Tibial artery (tissue), 4 donors: ENCODE measurements at regions of chr11 and their contacts with region 1.

Region 1: DNA sequence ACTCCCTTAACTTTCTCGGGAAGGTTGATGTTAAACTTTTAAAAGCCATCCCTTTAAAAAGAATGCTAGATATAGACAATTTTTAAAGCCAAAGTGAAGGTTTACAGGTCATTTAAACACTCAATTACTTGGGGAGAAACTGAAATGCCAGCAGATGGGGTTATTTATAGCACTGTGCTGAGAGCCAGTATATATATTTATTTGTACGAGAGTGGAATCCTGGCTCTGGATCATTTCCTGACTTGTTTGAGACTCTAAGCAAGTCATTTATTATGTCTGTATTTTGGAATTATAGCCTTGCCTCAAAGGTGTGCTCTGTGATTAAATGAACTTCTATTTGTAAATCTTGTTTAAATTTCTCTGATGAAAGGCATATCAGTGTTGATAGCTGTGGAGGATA is 6.8 kb upstream of the ZBED5 start:
- DNase-seq: no peak
- H3K4me3 ChIP-seq: no peak overlapping the region
- H3K27ac ChIP-seq: peak overlapping the region; percentile 67 to 91
- H3K4me1 ChIP-seq: peaks cover 0 to 82% (median 44%) of the 10 kb centered on the region in 4 donors
- H3K27me3 ChIP-seq: no peaks in the 10 kb centered on the region
- CTCF ChIP-seq: no peak

Region 2: GRCh38 chr11:10735481-10736475 is 128.9 kb before region 1 on chr11:
- intact Hi-C with region 1: no loop called
- DNase-seq: peak; percentile 95 to 96
- H3K4me3 ChIP-seq: peak overlapping the region; percentile 15 to 28
- H3K27ac ChIP-seq: peak overlapping the region; percentile 68 to 70
- H3K4me1 ChIP-seq: peaks cover 0 to 35% (median 13%) of the 10 kb centered on the region in 4 donors
- H3K27me3 ChIP-seq: no peaks in the 10 kb centered on the region
- CTCF ChIP-seq: peak; percentile 98 to 99

Region 3: GRCh38 chr11:10899121-10899830 is 34.6 kb after region 1 on chr11:
- intact Hi-C with region 1: loop called (anchors 5 kb)
- DNase-seq: peak; percentile 31 to 75
- H3K4me3 ChIP-seq: peak overlapping the region in 1 of 2 donors; percentile 27
- H3K27ac ChIP-seq: peak overlapping the region; percentile 92 to 93
- H3K4me1 ChIP-seq: peaks cover 0 to 44% (median 23%) of the 10 kb centered on the region in 4 donors
- H3K27me3 ChIP-seq: no peaks in the 10 kb centered on the region
- CTCF ChIP-seq: no peak

Region 4: GRCh38 chr11:10955616-10956015 is 90.9 kb after region 1 on chr11:
- intact Hi-C with region 1: no loop called
- DNase-seq: no peak
- H3K4me3 ChIP-seq: no peak overlapping the region
- H3K27ac ChIP-seq: no peak overlapping the region
- H3K4me1 ChIP-seq: no peaks in the 10 kb centered on the region
- H3K27me3 ChIP-seq: peaks cover 0 to 5% of the 10 kb centered on the region in 2 donors
- CTCF ChIP-seq: no peak